Activated CD4-positive, alpha-beta T cell treated with anti-CD3 and anti-CD28 coated beads, Interleukin-2, amount 10 ng/mL, durations not matched to agents 24 days and 14 days (primary cell): ENCODE measurements at regions of chr17 and their contacts with region 1.

Region 1: GRCh38 chr17:76408052-76408849 is 23.8 kb downstream of the SPHK1 start:
- DNase-seq: peak; percentile 91
- H3K4me3 Mint-ChIP-seq: no peak overlapping the region
- H3K27ac Mint-ChIP-seq: no peak overlapping the region
- H3K4me1 Mint-ChIP-seq: peaks cover 9% of the 10 kb centered on the region
- H3K27me3 Mint-ChIP-seq: no peaks in the 10 kb centered on the region

Region 2: DNA sequence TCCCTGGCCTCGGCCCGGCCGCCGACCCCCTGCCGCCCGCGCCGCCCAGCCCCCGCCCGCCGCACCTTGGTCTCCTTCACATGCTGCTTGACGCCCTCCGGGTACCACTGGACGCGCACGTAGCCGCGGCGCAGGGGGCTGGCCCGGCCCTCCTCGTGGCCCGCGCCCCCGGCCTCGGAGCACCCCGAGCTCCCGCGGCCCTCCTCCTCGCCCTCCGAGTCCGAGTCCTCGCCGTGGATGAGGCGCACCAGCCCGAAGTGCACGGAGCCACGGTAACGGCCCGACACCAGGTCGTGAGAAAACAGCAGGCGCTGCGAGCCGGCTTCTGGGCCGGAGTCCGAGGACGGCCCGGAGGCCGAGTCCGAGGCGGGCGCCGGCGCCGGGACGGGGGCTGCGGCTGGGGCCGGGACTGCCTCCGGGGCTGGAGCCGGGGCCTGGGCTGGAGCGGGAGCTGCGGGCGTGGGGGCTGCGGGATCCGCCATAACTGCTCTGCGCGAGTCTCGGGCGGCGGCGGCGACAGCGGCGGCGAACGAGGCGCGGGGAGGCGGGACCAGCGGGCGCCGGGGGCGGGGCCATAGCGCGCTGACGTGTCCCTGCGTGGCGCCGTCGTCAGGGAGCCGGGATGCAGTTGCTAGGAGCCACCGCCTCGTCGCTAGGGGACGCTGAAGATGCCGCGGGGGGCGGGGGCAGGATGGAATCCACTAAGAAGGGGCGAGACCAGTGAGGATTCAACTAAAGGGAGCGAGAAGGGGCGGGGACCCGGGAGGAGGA is 44.6 kb after region 1 on chr17 and contains the start of gene UBE2O:
- intact Hi-C with region 1: loop called (anchors 2 kb)
- DNase-seq: peak; percentile 99
- H3K4me3 Mint-ChIP-seq: peak within 1 kb of the TSS; percentile 93
- H3K27ac Mint-ChIP-seq: peak within 1 kb of the TSS; percentile 62
- H3K4me1 Mint-ChIP-seq: peaks cover 32% of the 10 kb centered on the region
- H3K27me3 Mint-ChIP-seq: peaks cover 4% of the 10 kb centered on the region
- total RNA-seq, gene UBE2O: 43.8 and 44.0 TPM in 2 replicates

Region 3: DNA sequence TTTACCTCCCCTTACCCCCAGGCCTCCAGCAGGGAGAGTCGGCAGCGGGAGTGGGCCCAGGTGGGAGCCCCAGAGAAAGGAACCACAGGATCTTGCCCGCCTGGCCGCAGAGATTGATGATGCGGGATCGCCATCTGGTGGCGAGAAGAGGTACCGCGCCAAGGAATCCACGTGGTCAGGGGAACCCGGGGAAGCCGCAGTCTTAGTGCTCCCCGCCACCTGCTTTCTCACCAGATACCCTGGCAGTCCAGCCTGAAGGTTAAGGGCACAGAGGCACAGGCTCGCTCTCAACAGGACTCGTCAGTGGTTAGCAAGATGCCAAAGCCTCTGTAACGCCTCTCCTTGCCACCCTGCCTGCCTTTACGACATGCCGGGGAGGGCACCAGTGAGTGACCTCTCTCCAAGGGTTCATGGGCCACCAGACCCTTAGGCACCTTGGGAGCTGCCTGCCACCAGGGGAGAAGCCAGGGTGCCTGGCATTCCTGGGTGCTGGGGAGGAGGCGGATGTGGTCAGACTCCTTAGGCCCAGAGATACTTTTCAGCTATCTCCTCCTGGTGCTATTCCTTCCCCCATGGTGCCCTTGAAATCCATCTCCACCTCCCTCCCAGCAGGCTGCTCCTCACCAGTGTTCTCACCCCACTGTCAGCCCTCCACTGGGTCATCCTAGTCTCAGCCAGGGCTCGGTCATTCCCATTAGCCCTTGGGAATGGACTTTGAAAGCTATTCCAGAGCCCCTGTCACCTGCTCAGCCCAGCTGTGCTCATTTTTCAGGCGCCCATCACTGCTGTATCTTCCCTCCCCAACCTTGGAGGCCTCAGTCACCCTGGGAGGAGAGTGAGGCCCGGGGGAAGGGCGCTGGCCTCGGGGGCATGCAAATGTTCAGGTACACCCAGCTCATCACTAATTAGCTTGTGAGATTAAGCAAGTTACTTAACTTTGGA is 98.4 kb after region 1 on chr17:
- intact Hi-C with region 1: loop called (anchors 1 kb)
- DNase-seq: peak; percentile 97
- H3K4me3 Mint-ChIP-seq: no peak overlapping the region
- H3K27ac Mint-ChIP-seq: peak overlapping the region; percentile 70
- H3K4me1 Mint-ChIP-seq: peaks cover 35% of the 10 kb centered on the region
- H3K27me3 Mint-ChIP-seq: peaks cover 2% of the 10 kb centered on the region